Left cardiac atrium (tissue), 4 donors: ENCODE measurements at regions of chr5 and their contacts with region 1.

Region 1: GRCh38 chr5:52693280-52693679 is 94.4 kb upstream of the ITGA1 start:
- DNase-seq: no peak
- ATAC-seq: peak; percentile 58 to 64

Region 2: GRCh38 chr5:52787600-52788504 is 94.6 kb after region 1 on chr5 and contains the starts of genes ITGA1 and PELO:
- intact Hi-C with region 1: loop called in 1 of 2 experiments (anchors 5 kb)
- DNase-seq: peak; percentile 86
- ATAC-seq: peak; percentile 89 to 97
- total RNA-seq, gene ITGA1: 29.3 to 34.9 TPM
- total RNA-seq, gene PELO: 16.1 to 23.6 TPM

Region 3: DNA sequence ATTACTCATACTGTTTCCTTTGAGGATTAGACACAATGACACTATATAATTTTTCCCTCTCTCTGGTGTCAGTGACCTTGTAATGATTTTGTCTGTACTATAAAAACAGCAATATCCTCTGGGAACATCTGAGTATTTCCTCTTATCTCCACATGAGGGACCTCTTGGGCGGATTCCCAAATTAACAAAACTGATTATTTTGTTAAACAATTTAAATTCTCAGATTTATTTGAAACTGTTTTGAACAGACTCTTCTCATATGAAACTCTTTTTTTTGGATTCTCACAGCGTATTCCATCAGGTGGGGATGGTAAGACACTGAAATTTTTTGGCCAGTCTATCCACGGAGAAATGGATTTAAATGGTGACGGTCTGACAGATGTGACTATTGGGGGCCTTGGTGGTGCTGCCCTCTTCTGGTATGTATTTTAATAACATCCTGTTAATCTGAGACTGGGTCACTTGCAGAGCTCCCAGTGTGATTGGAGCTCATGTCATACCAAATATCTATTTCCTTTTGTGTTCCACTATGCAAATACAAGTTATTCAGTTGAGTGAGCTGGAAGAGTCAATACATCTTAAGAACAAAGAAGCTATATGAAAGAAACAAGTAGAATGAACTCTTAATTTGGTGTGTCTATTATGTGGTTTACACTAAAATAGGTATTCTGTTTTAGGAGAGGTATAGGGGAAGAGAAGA is 222.0 kb after region 1 on chr5:
- intact Hi-C with region 1: loop called (anchors 10 kb)
- DNase-seq: peak; percentile 29
- ATAC-seq: peak; percentile 94 to 95